ENCODE measurements at regions of chr5 and their contacts with region 1.

Region 1: DNA sequence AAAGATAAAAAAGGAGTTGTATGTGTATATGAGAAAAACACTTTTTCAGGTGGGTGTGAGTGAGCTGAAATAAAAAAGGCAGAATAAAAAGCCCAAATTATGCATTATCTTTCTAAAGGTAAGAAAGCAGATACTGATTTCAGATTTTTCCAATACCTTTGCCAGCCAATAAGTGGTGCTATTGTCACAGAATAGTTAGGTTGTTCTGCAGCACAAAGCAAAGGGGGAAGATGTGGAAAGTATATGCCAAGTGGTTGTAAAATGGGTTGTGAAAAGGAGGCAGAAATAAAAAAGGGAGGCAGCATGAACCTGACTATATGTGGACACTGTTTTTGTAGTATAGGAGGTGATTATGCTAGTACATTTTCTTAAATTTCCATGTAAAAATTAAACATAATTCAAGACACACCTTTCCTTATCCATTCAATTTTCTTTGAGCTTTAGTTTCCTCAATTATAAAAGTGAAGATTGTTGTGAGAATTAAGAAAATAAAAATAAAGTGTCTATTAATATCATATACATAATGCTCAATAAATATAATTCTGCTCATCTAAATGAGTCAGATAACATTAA is 106.7 kb downstream of the SMIM15 start:
- DNase-seq: peak; percentile 28 to 56 (median 46)
- H3K4me3 ChIP-seq: no peak overlapping the region
- H3K4me3 Mint-ChIP-seq: no peak overlapping the region
- H3K27ac ChIP-seq: no peak overlapping the region
- H3K27ac Mint-ChIP-seq: no peak overlapping the region
- H3K4me1 ChIP-seq: no peaks in the 10 kb centered on the region
- H3K4me1 Mint-ChIP-seq: no peaks in the 10 kb centered on the region
- H3K27me3 ChIP-seq: no peaks in the 10 kb centered on the region
- H3K27me3 Mint-ChIP-seq: no peaks in the 10 kb centered on the region
- CTCF ChIP-seq: peak; percentile 87

Region 2: GRCh38 chr5:61658592-61659008 is 603.1 kb after region 1 on chr5:
- intact Hi-C with region 1: loop called (anchors 2 to 10 kb)
- DNase-seq: peak; percentile 38 to 60 (median 57)
- H3K4me3 ChIP-seq: no peak overlapping the region
- H3K4me3 Mint-ChIP-seq: no peak overlapping the region
- H3K27ac ChIP-seq: no peak overlapping the region
- H3K27ac Mint-ChIP-seq: no peak overlapping the region
- H3K4me1 ChIP-seq: no peaks in the 10 kb centered on the region
- H3K4me1 Mint-ChIP-seq: peaks cover 3% of the 10 kb centered on the region
- H3K27me3 ChIP-seq: no peaks in the 10 kb centered on the region
- H3K27me3 Mint-ChIP-seq: peaks cover 2 to 5% (median 4%) of the 10 kb centered on the region in 3 donors
- CTCF ChIP-seq: peak; percentile 91

Region 3: DNA sequence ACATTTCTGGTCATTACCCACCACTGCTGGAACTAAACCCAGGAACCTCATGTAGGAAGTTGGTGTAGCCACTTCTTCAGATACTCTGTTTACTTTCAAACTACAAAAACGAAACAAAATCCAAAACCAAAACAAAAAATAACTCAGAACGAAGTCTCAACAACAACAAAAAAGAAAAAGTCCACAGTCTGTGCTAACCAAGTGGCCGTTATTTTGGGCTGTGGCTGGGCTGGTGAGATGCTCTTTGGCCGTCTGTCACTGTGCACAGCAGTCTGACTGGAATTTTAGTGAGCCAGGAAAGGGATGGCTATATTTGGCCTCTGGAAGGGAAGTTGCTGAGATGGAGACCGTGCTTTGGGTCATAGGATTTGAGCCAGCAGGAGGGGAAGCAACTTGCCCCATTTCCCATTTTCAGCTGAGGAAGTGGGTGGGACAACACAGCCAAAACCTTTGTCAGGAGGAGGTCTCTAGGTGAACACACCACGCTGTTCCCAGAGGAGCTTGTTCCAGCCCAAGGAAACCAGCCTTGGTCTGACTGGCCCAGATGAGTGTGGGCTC is 610.6 kb after region 1 on chr5:
- intact Hi-C with region 1: loop called (anchors 2 to 10 kb)
- DNase-seq: peak in 2 of 3 donors; percentile 7 to 21
- H3K4me3 ChIP-seq: peak overlapping the region; percentile 15 to 72 (median 30)
- H3K4me3 Mint-ChIP-seq: peak overlapping the region; percentile 69 to 93
- H3K27ac ChIP-seq: peak overlapping the region; percentile 9 to 35
- H3K27ac Mint-ChIP-seq: peak overlapping the region; percentile 30 to 73 (median 55)
- H3K4me1 ChIP-seq: peaks cover 10 to 12% of the 10 kb centered on the region in 2 donors
- H3K4me1 Mint-ChIP-seq: peaks cover 12% of the 10 kb centered on the region
- H3K27me3 ChIP-seq: no peaks in the 10 kb centered on the region
- H3K27me3 Mint-ChIP-seq: peaks cover 2 to 5% (median 3%) of the 10 kb centered on the region in 3 donors
- CTCF ChIP-seq: no peak